ENCODE measurements at regions of chr13 and their contacts with region 1.

Region 1: DNA sequence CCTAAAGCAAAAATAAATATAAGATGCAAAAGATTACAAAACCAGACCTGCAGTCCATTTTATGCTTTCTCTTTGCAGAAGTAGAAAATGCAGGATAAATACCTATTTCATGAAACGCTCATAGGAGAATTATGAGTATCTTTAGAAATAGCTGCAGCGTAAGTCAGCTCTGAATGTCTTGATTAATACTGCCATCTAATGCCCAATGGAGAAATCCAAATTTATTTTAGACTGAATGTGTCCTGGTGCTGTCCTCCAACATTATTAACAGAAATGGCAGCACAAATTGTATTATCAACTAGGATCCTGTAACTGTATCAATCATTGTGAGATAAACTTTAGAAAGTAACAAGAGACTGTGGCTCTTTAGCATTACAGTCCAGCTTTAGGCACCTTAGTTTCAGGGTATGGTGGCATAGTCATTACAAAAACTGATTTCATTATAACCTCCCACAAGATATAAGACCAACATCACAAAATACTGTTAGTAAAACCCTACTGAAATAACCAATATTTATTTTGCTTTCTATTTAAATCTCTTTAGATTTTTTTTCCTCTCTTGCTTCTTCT is 162.1 kb upstream of the MIR17HG start:
- DNase-seq: peak; percentile 39
- H3K4me3 ChIP-seq: no peak overlapping the region
- H3K27ac ChIP-seq: peak overlapping the region in 1 of 2 experiments; percentile 67; a peak in 1 of 4 replicates
- H3K4me1 ChIP-seq: peaks cover 0 to 12% of the 10 kb centered on the region in 2 experiments; a peak in 2 of 4 replicates
- H3K27me3 ChIP-seq: no peaks in the 10 kb centered on the region
- CTCF ChIP-seq: peak; percentile 68
- EP300 ChIP-seq: no peak
- RAD21 ChIP-seq: peak; percentile 94

Region 2: GRCh38 chr13:91078093-91078679 is 107.2 kb before region 1 on chr13:
- CTCF ChIA-PET with region 1: interaction called, 55 read pairs
- POLR2A ChIA-PET with region 1: no interaction called
- DNase-seq: peak; percentile 27
- H3K4me3 ChIP-seq: no peak overlapping the region
- H3K27ac ChIP-seq: no peak overlapping the region
- H3K4me1 ChIP-seq: no peaks in the 10 kb centered on the region
- H3K27me3 ChIP-seq: no peaks in the 10 kb centered on the region
- CTCF ChIP-seq: peak; percentile 64
- EP300 ChIP-seq: no peak
- RAD21 ChIP-seq: peak; percentile 47

Region 3: DNA sequence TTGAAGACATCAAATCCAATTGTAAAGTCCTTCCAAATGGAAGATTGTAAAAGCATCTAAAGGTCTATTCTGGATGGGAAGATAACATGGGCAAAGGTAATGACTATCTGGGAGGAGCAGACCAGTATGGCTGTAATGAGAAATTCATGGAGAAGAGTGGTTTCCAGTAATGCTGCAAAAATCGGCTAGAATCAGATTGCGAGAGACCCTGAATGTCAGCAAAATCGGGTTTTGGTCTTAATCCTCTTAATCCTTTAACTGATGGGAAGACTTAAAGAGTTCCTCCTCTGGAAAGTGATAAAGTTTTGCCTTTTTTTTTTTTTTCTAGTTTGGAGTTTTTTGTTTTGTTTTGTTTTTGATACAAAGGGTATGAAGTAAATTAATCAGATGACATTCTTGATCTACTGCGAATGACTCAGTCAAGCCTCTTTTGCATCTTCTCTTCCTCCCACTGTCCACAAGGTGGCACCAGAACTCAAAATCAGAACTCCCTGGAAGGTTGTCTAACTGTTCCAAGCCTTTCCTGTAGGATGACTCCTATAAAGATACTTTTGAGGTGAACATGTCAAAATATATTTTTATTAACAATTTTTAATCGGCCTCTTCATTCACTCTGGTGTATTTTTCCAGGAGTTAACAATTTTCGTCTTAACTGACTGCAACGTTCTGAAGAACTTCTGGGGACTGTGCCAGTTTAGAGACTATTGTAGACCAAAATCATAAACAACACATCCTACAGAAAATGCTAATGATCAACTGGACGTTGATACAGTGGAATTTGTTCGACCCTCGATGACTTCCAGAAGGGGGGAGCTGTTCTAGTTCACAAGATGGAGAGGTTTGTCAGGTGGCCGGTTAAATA is 51.2 kb before region 1 on chr13:
- CTCF ChIA-PET with region 1: interaction called, 79 read pairs
- POLR2A ChIA-PET with region 1: no interaction called
- DNase-seq: peak; percentile 37
- H3K4me3 ChIP-seq: no peak overlapping the region
- H3K27ac ChIP-seq: peak overlapping the region in 1 of 2 experiments; percentile 34; a peak in 1 of 4 replicates
- H3K4me1 ChIP-seq: peaks cover 0 to 2% of the 10 kb centered on the region in 2 experiments; a peak in 2 of 4 replicates
- H3K27me3 ChIP-seq: no peaks in the 10 kb centered on the region
- CTCF ChIP-seq: peak; percentile 90
- EP300 ChIP-seq: no peak
- RAD21 ChIP-seq: peak; percentile 94

Region 4: DNA sequence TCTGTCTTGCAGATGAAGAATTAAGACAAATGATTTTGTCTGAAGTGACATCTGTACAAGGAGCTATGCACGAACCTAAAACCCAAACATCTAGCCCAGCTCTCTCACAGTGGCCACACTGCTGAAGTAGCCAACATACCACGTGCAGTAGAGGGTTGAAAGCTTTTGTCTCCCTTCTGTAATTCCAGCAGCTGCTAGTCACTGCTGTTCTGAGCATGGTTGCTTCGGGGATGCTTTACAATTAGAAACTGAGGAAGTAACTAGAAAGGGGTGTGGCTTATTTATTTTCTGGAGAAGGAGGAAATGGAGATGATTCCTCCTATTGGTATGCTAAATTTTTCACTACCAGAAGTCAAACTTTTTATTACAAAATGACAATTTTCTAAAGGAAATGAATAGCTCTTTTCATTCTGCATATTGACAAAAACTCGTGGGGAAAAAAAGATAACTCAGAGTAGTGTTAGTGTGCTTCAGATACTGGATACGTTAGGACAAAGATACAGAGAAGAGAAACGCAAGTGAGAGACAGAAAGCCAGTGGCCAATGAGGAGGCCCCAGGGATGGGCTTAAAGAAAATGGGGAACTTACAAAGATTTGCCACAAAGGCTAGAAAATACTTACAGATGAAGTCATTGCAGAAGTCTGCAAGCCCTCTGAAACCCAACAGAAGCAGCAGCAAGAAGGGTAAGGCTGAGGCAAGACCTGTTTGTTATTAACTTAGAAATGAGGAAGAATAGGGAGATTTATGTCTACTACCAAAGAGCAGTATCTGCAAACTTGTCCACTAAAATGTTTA is 30.6 kb before region 1 on chr13:
- CTCF ChIA-PET with region 1: interaction called, 38 read pairs
- POLR2A ChIA-PET with region 1: no interaction called
- DNase-seq: no peak
- H3K4me3 ChIP-seq: no peak overlapping the region
- H3K27ac ChIP-seq: peak overlapping the region in 1 of 2 experiments; percentile 91; a peak in 2 of 4 replicates
- H3K4me1 ChIP-seq: peaks cover 0 to 23% of the 10 kb centered on the region in 2 experiments; a peak in 2 of 4 replicates
- H3K27me3 ChIP-seq: no peaks in the 10 kb centered on the region
- CTCF ChIP-seq: no peak
- EP300 ChIP-seq: no peak
- RAD21 ChIP-seq: no peak

Region 5: GRCh38 chr13:91167706-91168385 is 17.5 kb before region 1 on chr13:
- CTCF ChIA-PET with region 1: interaction called, 18 read pairs
- POLR2A ChIA-PET with region 1: no interaction called
- DNase-seq: no peak
- H3K4me3 ChIP-seq: no peak overlapping the region
- H3K27ac ChIP-seq: peak overlapping the region; percentile 59 to 77; a peak in 3 of 4 replicates
- H3K4me1 ChIP-seq: peaks cover 0 to 2% of the 10 kb centered on the region in 2 experiments; a peak in 2 of 4 replicates
- H3K27me3 ChIP-seq: no peaks in the 10 kb centered on the region
- CTCF ChIP-seq: no peak
- EP300 ChIP-seq: peak in 1 of 2 experiments; percentile 76; a peak in 2 of 4 replicates
- RAD21 ChIP-seq: no peak